ENCODE measurements at regions of chr2 and their contacts with region 1.

Region 1: GRCh38 chr2:25362049-25362433 is 20.3 kb upstream of the DNMT3A start:
- DNase-seq: peak; percentile 77 to 93
- H3K4me3 ChIP-seq: peak overlapping the region; percentile 55
- H3K27ac ChIP-seq: no peak overlapping the region
- H3K4me1 ChIP-seq: 0 out of 2 replicates have a peak, but pooled peaks cover 7% of the 10 kb centered on the region
- H3K27me3 ChIP-seq: no peaks in the 10 kb centered on the region
- CTCF ChIP-seq: peak; percentile 97

Region 2: DNA sequence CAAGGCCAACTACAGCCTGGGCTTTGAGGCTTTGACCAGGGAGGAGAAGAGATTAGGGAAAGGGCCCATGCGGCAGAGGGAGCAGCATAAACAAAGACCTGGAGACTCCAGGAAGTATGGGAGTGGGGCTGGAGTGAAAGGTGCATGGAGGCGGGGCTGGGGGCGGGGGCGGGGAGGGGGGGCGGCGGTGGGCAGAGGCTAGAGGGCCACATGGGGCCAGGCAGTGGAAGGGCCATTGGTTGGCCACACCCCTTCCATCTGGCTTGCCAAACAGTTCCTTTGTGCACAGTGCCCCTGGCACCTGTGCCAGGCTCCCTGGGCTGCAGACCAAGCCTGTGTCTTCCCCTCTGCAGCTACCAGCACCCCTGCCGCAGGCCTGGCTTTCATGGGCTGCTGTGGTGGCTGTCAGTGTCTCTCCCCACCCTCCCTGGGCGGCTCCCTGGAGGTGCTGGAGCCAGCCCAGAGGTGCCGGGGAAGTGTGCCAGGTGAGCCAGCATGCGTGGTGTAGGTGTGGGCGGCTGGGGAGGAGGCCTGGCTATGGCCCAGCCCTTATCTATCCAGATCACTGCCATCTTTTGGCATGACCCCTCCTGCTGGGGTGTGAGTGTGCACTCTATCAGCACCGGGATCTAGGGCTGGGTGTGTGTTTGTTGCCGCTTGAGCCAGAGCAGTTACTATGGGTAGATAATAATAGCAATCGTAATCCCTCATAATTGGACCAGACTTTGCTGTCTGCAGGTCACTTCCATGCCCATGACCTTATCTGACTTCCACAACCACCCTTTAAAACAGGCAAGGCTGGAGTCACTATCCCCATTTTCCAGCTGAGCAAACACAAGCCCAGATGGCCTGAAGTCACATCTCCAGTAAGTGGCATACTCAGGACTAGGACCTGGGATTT is 50.8 kb before region 1 on chr2:
- CTCF ChIA-PET with region 1: interaction called, 19 read pairs
- POLR2A ChIA-PET with region 1: no interaction called
- intact Hi-C with region 1: no loop called
- DNase-seq: peak; percentile 79 to 90
- H3K4me3 ChIP-seq: no peak overlapping the region
- H3K27ac ChIP-seq: no peak overlapping the region
- H3K4me1 ChIP-seq: peaks cover 20% of the 10 kb centered on the region
- H3K27me3 ChIP-seq: no peaks in the 10 kb centered on the region
- CTCF ChIP-seq: no peak

Region 3: GRCh38 chr2:25347205-25347815 is 14.7 kb before region 1 on chr2:
- CTCF ChIA-PET with region 1: interaction called, 16 read pairs
- POLR2A ChIA-PET with region 1: no interaction called
- intact Hi-C with region 1: no loop called
- DNase-seq: peak; percentile 19 to 59
- H3K4me3 ChIP-seq: no peak overlapping the region
- H3K27ac ChIP-seq: no peak overlapping the region
- H3K4me1 ChIP-seq: peaks cover 26% of the 10 kb centered on the region
- H3K27me3 ChIP-seq: no peaks in the 10 kb centered on the region
- CTCF ChIP-seq: no peak

Region 4: DNA sequence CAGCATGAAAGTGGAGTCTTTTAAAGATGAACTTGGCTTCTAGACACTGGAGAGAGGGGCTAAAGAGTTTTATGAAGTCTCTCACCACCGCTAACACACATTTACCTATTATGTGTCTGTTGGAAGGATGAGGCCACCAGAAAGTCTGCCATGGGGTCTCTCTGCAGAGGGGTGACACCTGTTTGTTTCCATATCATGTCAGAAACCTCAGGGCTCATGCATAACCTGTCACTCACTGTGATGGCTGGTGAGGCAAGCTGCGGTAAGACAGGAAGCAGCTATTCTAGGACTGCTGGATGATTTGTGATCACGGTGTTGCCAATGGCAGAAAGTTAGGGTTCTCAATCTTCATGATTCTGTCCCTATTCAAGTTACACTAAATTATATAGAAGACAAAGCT is 40.4 kb after region 1 on chr2:
- CTCF ChIA-PET with region 1: no interaction called
- POLR2A ChIA-PET with region 1: no interaction called
- intact Hi-C with region 1: no loop called
- DNase-seq: no peak
- H3K4me3 ChIP-seq: no peak overlapping the region
- H3K27ac ChIP-seq: no peak overlapping the region
- H3K4me1 ChIP-seq: no peaks in the 10 kb centered on the region
- H3K27me3 ChIP-seq: no peaks in the 10 kb centered on the region
- CTCF ChIP-seq: no peak

Region 5: DNA sequence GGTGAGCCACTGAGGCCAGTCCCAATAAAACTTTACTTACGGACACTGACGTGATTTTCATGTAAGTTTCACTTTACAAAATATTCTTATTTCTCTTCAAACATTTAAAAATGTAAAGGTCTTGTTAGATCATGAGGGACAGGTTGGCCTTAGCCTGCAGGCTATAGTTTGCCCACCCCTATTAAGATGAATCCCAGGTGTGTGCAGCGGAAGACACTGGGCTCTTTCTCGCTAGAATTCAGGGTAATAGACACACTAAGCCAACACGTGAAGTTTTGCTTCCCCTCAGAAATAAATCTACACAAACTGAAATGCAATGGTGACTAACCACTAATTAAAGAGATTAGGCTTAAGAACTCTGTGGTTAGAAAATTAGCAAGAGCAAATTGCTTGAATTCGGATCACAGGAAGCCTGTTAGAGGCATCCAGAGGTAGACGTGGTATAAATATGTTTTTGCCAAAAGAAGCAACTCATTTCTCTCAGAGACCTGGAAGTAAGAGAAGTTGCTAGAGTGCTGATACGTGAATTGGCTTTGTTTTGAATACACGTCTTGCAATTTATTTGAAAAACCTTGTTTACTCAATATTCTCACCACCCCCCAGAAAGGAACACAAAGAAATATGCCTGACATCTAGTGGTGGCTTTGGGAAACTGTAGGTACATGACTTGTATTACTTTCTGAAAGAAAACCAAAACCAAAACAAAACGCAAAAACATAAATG is 159.8 kb after region 1 on chr2:
- CTCF ChIA-PET with region 1: no interaction called
- POLR2A ChIA-PET with region 1: no interaction called
- intact Hi-C with region 1: loop called (anchors 5 kb)
- DNase-seq: peak; percentile 15 to 63
- H3K4me3 ChIP-seq: no peak overlapping the region; the same call in 1 of the 2 replicates
- H3K27ac ChIP-seq: no peak overlapping the region
- H3K4me1 ChIP-seq: peaks cover 4% of the 10 kb centered on the region
- H3K27me3 ChIP-seq: no peaks in the 10 kb centered on the region
- CTCF ChIP-seq: peak; percentile 89

Region 6: DNA sequence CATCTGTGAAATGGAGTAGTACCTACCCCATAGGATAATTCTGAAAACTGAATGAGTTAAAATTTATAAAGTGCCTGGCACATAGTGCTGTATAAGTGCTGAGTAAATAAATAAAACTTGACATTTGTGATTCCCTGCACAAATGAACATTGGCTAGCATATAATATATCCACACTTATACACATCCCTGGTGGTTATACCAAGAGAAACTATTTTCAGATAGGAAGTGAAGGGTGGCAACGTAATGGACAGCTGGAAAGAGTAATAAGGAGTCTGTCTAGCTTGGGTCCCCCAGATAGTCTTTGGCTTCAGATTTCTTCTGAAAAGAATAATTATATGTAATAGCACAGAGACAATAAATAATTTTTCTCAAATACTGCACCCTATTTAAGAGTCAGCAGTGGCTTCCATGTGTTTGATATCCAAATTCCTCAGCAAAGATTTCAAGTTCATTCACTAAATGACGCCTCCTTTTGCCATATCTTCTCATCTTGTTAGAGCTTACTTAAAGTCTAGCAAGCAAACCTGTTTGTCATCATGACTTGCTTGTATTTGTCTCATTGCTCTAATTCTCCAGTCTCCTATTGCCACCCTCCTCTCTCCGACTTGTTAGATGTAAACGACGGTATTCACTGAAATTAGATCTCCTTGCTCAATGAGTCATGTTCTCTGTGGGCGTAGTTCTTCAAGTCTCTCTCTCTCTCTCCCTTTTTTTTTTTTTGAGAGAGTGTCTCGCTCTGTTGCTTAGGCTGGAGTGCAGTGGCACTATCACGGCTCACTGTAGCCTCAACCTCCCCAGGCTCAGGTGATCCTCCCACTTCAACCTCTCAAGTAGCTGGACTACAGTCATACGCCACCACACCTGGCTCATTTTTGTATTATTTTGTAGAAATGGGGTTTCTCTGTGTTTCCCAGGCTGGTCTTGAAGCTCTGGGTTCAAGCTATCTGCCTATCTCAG is 993.3 kb after region 1 on chr2:
- CTCF ChIA-PET with region 1: interaction called, 10 read pairs
- POLR2A ChIA-PET with region 1: no interaction called
- intact Hi-C with region 1: no loop called
- DNase-seq: peak; percentile 48 to 100
- H3K4me3 ChIP-seq: peak overlapping the region; percentile 46
- H3K27ac ChIP-seq: peak overlapping the region; percentile 99
- H3K4me1 ChIP-seq: peaks cover 63% of the 10 kb centered on the region
- H3K27me3 ChIP-seq: no peaks in the 10 kb centered on the region
- CTCF ChIP-seq: peak; percentile 17; the same call in 1 of the 2 replicates

Region 7: DNA sequence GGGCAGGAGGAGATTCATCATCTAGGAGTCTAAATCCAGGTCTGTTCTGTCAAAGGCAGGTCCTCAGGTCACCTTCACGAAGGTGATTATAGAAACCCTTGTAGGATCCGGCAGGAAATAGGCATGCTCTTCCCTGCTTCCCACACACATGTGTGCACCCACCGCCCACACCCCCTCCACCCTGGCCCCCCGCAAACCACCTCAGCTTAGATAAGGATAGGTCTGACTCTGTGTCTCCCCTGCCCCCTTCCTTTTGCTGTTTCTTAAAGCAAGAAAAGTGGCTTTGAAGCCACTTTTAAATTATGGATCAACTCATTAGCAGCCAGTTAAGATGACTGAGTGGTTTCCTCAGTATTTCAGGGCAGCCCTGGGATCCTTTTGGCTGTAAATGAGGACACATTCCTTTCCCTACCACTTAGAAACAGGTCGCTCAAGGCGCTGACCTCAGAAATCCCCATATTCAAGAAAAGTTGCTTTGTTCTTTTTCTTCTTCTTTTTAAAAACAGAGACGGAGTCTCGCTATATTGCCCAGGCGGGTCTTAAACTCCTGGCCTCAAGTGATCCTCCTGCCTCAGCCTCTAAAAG is 1293.7 kb after region 1 on chr2:
- CTCF ChIA-PET with region 1: interaction called, 11 read pairs
- POLR2A ChIA-PET with region 1: no interaction called
- intact Hi-C with region 1: no loop called
- DNase-seq: no peak
- H3K4me3 ChIP-seq: no peak overlapping the region
- H3K27ac ChIP-seq: no peak overlapping the region
- H3K4me1 ChIP-seq: 0 out of 2 replicates have a peak, but pooled peaks cover 4% of the 10 kb centered on the region
- H3K27me3 ChIP-seq: no peaks in the 10 kb centered on the region
- CTCF ChIP-seq: no peak